AG04449 (cell line): ENCODE measurements at regions of chr1 and their contacts with region 1.

Region 1: GRCh38 chr1:22275721-22276395 is 133.0 kb upstream of the WNT4 start:
- DNase-seq: no peak
- H3K4me3 ChIP-seq: no peak overlapping the region
- CTCF ChIP-seq: peak; percentile 91

Region 2: GRCh38 chr1:22025368-22026155 is 250.3 kb before region 1 on chr1:
- CTCF ChIA-PET with region 1: no interaction called
- POLR2A ChIA-PET with region 1: no interaction called
- DNase-seq: no peak
- H3K4me3 ChIP-seq: peak overlapping the region; percentile 99
- CTCF ChIP-seq: no peak

Region 3: DNA sequence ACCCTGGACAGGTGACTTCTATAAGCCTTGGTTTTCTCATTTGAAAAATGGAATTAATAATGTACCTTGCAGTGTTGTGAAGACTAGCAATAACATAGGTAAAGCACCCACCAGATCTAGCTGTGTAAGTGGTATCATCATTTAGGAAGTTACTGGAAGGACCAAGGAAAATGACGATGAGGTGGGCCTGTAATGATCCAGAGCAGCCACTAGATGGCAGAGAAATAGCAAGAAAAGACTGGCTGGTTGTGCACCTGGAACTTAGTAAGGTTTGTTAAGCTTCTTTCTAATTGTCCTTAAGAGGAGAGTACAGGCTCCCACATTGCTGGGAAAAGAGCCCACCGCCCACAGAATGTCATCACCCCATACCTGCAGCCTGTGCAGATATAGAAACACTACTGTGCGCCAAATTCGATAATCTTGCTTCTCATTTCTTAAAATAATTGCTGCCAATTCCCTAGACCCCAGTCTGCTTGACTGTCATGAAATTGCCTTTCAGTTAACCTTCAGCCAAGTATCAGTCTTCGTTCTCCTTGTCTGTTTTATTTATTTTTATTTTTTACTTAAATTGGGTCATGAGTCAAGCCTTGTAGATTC is 170.1 kb before region 1 on chr1:
- CTCF ChIA-PET with region 1: interaction called, 35 read pairs
- POLR2A ChIA-PET with region 1: no interaction called
- DNase-seq: no peak
- H3K4me3 ChIP-seq: no peak overlapping the region
- CTCF ChIP-seq: peak; percentile 78

Region 4: GRCh38 chr1:22114083-22115012 is 161.5 kb before region 1 on chr1:
- CTCF ChIA-PET with region 1: interaction called, 11 read pairs
- POLR2A ChIA-PET with region 1: no interaction called
- DNase-seq: no peak
- H3K4me3 ChIP-seq: no peak overlapping the region
- CTCF ChIP-seq: no peak

Region 5: GRCh38 chr1:22426781-22427180 is 150.9 kb after region 1 on chr1:
- CTCF ChIA-PET with region 1: no interaction called
- POLR2A ChIA-PET with region 1: no interaction called
- DNase-seq: no peak
- H3K4me3 ChIP-seq: no peak overlapping the region
- CTCF ChIP-seq: no peak